Activated CD4-positive, alpha-beta T cell treated with anti-CD3 and anti-CD28 coated beads for 36 hours (primary cell): ENCODE measurements at regions of chr4 and their contacts with region 1.

Region 1: DNA sequence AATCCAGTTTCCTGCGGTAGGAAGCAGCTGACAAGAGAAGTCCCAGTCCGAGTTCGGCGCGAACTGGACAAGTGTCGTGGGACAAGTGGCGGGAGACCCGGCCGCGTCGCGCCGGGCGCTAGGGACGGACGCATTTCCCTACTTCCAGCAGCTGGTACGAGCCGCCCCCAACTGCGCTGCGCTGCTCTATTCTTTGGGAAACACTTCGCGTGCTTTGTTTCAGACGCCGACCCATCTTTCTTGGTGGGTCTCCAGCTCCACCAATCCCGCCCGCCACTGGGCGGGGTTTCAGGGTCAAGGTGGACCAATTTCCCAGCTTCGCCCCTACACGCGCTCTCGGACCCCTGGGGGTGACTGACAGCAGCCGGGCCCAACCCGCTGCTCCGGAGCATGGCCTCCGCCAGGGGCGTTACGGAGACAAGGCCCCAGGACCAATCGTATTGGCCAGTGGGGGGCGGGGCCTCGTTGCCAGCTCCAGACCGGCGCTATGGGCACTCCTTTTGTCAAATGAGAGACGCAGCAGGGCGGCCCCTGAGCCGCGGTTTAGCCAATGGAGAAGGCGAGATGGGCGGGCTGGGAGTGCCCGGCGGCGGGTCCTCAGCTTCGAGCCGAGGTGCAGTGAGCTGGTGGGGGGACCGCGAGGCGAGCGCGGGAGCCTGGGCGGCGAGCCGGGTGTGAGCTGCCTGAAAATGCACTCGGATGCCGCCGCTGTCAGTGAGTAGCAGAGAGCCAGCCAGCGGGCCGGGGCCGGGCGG is at the start of gene DCUN1D4:
- DNase-seq: peak; percentile 99
- ATAC-seq: peak; percentile 92
- H3K4me3 Mint-ChIP-seq: peak within 1 kb of the TSS; percentile 84
- H3K27ac Mint-ChIP-seq: peak within 1 kb of the TSS; percentile 90
- H3K4me1 Mint-ChIP-seq: peaks cover 18% of the 10 kb centered on the region
- H3K27me3 Mint-ChIP-seq: no peaks in the 10 kb centered on the region
- total RNA-seq, gene DCUN1D4: 31.2 to 41.2 TPM

Region 2: DNA sequence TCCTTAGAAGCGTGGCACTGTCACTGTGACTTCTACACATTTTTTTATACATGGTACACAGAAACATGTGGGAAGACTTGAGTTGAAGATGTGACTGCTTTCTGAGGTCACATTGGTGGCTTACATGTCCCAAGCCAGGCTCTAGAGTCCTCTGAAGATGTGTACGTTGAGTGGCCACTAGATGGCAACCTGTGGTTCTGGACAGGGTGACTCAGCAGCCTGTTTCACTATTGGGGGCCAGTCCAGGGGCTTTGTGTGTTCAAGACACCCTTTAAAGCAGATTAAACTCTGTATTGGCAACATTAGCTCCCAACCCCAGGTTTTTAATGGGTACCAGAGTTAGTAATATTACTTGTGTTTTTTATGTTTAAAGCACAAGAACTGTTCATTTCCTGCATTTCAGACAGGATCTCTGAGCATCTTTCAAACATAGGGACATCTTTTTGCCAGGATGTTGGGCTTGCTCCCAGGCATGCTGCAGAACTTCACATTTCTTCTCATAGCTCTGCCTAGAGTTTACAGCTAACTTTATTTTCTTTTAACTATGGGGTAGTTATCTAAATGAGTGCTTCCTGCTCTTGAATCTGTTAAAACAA is 53.2 kb after region 1 on chr4:
- CTCF ChIA-PET with region 1: interaction called, 3 read pairs
- POLR2A ChIA-PET with region 1: no interaction called
- intact Hi-C with region 1: loop called in 1 of 2 experiments (anchors 5 kb)
- DNase-seq: peak; percentile 68
- ATAC-seq: peak; percentile 97
- H3K4me3 Mint-ChIP-seq: no peak overlapping the region
- H3K27ac Mint-ChIP-seq: no peak overlapping the region
- H3K4me1 Mint-ChIP-seq: peaks cover 10% of the 10 kb centered on the region
- H3K27me3 Mint-ChIP-seq: no peaks in the 10 kb centered on the region

Region 3: DNA sequence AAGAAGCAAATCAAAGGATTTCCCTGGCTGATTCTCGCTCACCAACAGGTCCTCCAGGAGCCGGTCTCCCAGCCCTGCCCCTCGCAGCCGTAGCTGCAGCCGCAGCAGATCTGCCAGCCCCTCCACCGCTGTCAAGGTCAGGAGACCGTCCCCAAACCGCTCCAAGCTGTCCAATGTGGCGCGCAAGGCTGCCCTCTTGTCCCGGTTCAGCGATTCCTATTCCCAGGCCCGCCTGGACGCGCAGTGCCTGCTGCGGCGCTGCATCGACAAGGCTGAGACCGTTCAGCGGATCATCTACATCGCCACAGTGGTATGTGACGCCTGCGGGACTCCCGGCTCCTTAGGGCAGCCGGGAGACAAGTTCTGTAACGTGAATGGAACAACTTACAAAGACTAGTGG is 234.0 kb after region 1 on chr4:
- CTCF ChIA-PET with region 1: no interaction called
- POLR2A ChIA-PET with region 1: no interaction called
- intact Hi-C with region 1: no loop called
- DNase-seq: no peak
- ATAC-seq: no peak
- H3K4me3 Mint-ChIP-seq: no peak overlapping the region
- H3K27ac Mint-ChIP-seq: no peak overlapping the region
- H3K4me1 Mint-ChIP-seq: no peaks in the 10 kb centered on the region
- H3K27me3 Mint-ChIP-seq: peaks cover 25% of the 10 kb centered on the region

Region 4: GRCh38 chr4:52244848-52245247 is 402.1 kb after region 1 on chr4:
- CTCF ChIA-PET with region 1: no interaction called
- POLR2A ChIA-PET with region 1: no interaction called
- intact Hi-C with region 1: no loop called
- DNase-seq: no peak
- ATAC-seq: no peak
- H3K4me3 Mint-ChIP-seq: no peak overlapping the region
- H3K27ac Mint-ChIP-seq: no peak overlapping the region
- H3K4me1 Mint-ChIP-seq: no peaks in the 10 kb centered on the region
- H3K27me3 Mint-ChIP-seq: no peaks in the 10 kb centered on the region

Region 5: DNA sequence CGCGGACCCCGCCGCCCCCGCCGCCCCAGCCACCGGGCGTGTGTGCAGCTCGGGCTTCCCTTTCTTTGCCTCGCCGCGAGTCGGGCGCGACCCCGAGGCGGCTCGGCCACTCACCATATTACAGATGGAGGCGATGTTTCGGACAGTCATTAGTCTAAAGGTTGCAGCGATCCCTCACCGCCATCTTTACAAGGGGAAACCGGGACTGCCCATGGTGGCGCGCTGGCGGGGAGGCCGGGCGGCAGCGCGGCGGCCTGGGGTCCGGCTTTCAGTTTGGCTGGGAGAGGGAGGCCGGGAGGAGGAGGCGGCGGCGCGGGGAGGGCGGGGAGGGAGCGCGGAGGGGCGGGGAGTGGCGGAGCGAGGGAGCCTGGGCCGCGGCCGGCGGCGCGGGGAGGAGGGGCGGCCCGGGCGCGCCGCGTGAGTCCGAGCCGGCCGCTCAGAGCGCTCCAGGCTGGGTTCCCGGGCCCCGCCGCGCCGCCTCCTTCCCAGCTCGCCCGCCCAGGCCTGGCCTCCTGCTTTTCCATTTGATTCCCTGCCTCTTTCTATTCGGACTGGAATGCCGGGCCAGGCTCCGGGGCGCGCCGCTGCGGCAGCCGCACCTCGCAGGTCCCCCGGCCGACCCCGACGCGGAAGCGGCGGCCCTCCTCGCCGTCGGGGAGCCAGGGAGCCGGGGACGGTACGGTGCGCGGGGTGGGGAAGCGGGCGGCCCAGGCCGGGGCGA is 816.4 kb after region 1 on chr4 and contains the start of gene USP46:
- CTCF ChIA-PET with region 1: no interaction called
- POLR2A ChIA-PET with region 1: no interaction called
- intact Hi-C with region 1: loop called in 1 of 2 experiments (anchors 2 kb)
- DNase-seq: peak; percentile 74
- ATAC-seq: peak; percentile 86
- H3K4me3 Mint-ChIP-seq: peak within 1 kb of the TSS; percentile 80
- H3K27ac Mint-ChIP-seq: peak within 1 kb of the TSS; percentile 78
- H3K4me1 Mint-ChIP-seq: peaks cover 18% of the 10 kb centered on the region
- H3K27me3 Mint-ChIP-seq: peaks cover 12% of the 10 kb centered on the region
- total RNA-seq, gene USP46: 4.3 to 5.4 TPM

Region 6: GRCh38 chr4:53113431-53114225 is 1270.9 kb after region 1 on chr4:
- CTCF ChIA-PET with region 1: no interaction called
- POLR2A ChIA-PET with region 1: no interaction called
- intact Hi-C with region 1: loop called in 1 of 2 experiments (anchors 5 kb)
- DNase-seq: peak; percentile 38
- ATAC-seq: peak; percentile 99
- H3K4me3 Mint-ChIP-seq: no peak overlapping the region
- H3K27ac Mint-ChIP-seq: peak overlapping the region; percentile 91
- H3K4me1 Mint-ChIP-seq: peaks cover 33% of the 10 kb centered on the region
- H3K27me3 Mint-ChIP-seq: no peaks in the 10 kb centered on the region